ENCODE measurements at regions of chr3 and their contacts with region 1.

Region 1: GRCh38 chr3:39156421-39156820 is 3.0 kb upstream of the CSRNP1 start:
- DNase-seq: no peak
- CTCF ChIP-seq: no peak

Region 2: GRCh38 chr3:39171860-39172259 is 15.4 kb after region 1 on chr3:
- CTCF ChIA-PET with region 1: interaction called, 13 read pairs
- POLR2A ChIA-PET with region 1: no interaction called
- DNase-seq: no peak
- CTCF ChIP-seq: no peak

Region 3: DNA sequence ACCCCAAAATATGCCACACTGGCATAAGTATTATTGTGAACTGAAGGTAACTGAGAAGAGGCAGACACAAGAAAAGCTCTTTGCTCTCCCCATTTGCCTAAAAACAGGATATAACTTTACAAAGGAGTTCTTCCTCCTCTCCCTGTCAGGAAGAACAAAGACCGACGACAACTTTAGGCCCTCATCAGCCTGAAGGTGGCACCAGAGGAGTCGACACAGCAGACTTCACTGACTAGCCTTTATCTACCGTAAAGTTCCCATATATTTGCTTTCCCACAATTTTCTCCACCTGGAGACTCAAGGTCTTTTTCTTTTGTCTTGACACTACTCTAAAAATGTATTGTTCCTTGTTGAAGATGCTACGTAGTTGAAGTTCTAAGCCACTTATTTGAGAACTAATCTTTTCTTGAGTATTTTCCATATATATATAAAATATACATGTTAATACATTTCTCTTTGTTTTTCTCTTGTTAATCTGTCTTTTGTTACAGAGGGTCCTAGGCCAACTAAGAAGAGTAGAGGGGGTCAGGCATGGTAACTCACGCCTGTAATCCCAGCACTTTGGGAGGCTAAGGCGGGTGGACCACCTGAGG is 52.1 kb after region 1 on chr3:
- CTCF ChIA-PET with region 1: no interaction called
- POLR2A ChIA-PET with region 1: no interaction called
- DNase-seq: no peak
- CTCF ChIP-seq: peak; percentile 74

Measured in GM10248 (cell line).